Activated CD8-positive, alpha-beta T cell treated with anti-CD3 and anti-CD28 coated beads, Interleukin-2, amount 10 ng/mL, durations not matched to agents 7 days and 5 days (primary cell): ENCODE measurements at regions of chr17 and their contacts with region 1.

Region 1: DNA sequence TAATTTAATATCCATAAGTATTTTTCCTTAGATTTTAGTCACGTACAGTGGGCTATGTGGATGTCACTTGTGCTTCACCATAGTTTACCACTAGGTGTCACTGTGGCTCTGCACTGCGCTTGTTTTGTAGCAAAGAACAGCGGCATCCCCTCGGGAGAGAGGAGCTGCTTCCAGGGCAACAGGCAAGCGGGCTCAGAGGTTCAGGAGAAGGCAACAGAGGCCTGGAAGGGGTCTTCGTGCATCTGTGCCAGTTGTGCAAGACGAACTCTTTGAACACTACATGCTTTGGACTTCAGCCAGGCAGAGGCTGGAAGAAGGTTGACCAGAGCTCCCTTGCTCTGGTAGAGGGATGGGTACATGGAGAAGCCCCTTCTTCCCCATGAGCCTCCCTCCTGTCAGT is 20.6 kb downstream of the CYB561 start:
- DNase-seq: peak; percentile 83
- ATAC-seq: peak; percentile 82
- H3K4me3 Mint-ChIP-seq: no peak overlapping the region
- H3K27ac Mint-ChIP-seq: no peak overlapping the region
- H3K4me1 Mint-ChIP-seq: peaks cover 52% of the 10 kb centered on the region
- H3K27me3 Mint-ChIP-seq: no peaks in the 10 kb centered on the region

Region 2: GRCh38 chr17:63140255-63140654 is 285.2 kb before region 1 on chr17:
- CTCF ChIA-PET with region 1: no interaction called
- POLR2A ChIA-PET with region 1: no interaction called
- DNase-seq: no peak
- ATAC-seq: no peak
- H3K4me3 Mint-ChIP-seq: no peak overlapping the region
- H3K27ac Mint-ChIP-seq: no peak overlapping the region
- H3K4me1 Mint-ChIP-seq: no peaks in the 10 kb centered on the region
- H3K27me3 Mint-ChIP-seq: no peaks in the 10 kb centered on the region

Region 3: DNA sequence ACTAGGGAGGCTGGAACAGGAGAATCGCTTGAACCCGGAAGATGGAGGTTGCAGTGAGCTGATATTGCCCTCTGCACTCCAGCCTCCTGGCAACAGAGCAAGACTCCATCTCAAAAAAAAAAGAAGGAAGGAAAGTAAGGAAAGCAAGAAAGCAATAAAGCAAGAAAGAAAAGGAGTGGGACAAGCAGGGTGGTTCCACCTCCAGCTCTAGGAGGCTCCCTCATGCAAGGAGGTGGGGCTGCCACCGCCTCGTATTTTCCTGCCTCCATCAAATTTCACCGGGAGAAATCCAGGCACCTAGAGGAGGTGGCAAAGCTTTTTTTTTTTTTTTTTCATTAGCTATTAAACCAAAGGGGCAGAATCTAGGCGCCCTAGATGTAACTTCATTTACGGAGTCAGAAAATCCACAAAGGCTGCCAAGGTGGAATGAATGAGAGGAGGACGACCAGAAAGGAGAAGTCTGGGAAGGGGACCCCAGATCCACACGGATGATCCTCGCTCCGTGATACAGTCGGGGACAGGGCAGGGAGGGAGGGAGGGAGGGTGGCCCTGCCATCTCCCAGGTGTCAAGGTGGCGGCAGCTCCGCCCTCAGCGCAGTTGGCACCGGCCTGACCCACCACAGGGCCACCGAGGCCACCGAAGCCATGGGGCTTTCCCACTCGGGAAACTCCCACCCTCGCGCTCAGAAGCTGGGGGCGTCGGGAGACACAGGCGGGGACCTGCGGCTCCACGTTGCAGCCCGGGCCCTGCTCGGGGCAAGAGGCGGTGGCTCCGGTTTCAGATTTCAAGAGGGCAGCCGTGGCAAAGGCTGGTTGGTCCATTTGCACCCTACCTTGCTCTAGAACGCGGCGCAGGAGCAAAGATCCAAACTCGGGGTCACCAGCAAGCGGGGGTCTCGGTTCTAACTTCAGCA is 19.8 kb after region 1 on chr17:
- CTCF ChIA-PET with region 1: interaction called, 20 read pairs
- POLR2A ChIA-PET with region 1: interaction called, 4 read pairs
- DNase-seq: no peak
- ATAC-seq: peak; percentile 30
- H3K4me3 Mint-ChIP-seq: peak overlapping the region; percentile 52
- H3K27ac Mint-ChIP-seq: no peak overlapping the region
- H3K4me1 Mint-ChIP-seq: peaks cover 33% of the 10 kb centered on the region
- H3K27me3 Mint-ChIP-seq: peaks cover 18% of the 10 kb centered on the region

Region 4: GRCh38 chr17:63478791-63479494 is 53.5 kb after region 1 on chr17:
- CTCF ChIA-PET with region 1: interaction called, 270 read pairs
- POLR2A ChIA-PET with region 1: no interaction called
- DNase-seq: peak; percentile 87
- ATAC-seq: peak; percentile 89
- H3K4me3 Mint-ChIP-seq: no peak overlapping the region
- H3K27ac Mint-ChIP-seq: no peak overlapping the region
- H3K4me1 Mint-ChIP-seq: peaks cover 16% of the 10 kb centered on the region
- H3K27me3 Mint-ChIP-seq: peaks cover 39% of the 10 kb centered on the region

Region 5: GRCh38 chr17:63600569-63601438 is 175.3 kb after region 1 on chr17 and contains the start of gene TACO1:
- CTCF ChIA-PET with region 1: interaction called, 15 read pairs
- POLR2A ChIA-PET with region 1: no interaction called
- DNase-seq: peak; percentile 82
- ATAC-seq: peak; percentile 90
- H3K4me3 Mint-ChIP-seq: peak within 1 kb of the TSS; percentile 89
- H3K27ac Mint-ChIP-seq: peak within 1 kb of the TSS; percentile 91
- H3K4me1 Mint-ChIP-seq: peaks cover 33% of the 10 kb centered on the region
- H3K27me3 Mint-ChIP-seq: no peaks in the 10 kb centered on the region
- total RNA-seq, gene TACO1: 22.9 to 24.5 TPM

Region 6: DNA sequence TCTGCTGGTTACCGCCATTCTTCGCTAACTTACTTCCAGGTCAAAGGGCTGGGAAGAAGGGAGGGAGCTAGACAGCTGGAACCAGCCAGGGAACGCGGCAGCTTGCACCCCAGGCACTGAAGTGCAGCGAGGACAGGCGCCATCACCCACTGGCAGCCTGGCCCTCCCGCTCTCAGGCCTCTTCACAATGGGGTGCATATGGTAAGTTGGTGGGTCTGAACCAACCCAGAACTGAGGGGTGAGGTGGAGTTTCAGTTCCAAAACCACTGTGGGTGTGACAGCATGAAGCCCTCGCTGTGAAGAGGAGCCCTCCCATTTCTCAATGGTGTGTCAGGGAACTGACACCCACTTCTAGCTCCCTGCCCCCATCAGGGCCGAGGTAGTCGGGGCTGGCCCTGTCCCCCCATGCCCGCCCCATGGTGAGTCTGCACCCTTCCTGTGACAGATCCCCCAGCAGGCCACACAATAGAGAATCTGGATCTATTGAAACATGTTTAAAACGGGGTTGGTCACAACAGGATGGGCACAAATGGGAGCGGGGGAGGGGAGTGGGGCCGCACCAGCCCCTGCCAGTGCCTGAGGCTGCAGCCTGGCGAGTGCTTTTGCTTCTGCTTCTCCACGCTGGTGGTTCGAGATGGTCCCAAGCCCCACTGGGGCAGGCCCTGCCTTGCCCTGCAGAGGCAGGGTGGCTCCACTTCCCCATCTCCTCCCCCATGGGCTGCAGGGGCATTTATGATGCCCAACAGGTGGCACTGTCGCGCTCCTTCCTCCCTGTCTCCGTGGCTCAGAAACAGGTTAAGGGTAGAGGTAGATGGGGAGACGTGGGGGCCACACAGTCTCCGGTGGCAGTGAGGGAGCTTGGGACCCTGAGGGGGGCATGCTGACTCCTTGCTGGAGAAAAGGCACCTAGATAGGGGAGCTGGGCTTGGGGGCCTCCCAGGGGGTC is 272.1 kb after region 1 on chr17:
- CTCF ChIA-PET with region 1: interaction called, 10 read pairs
- POLR2A ChIA-PET with region 1: interaction called, 4 read pairs
- DNase-seq: peak; percentile 91
- ATAC-seq: peak; percentile 35
- H3K4me3 Mint-ChIP-seq: peak overlapping the region; percentile 96
- H3K27ac Mint-ChIP-seq: peak overlapping the region; percentile 98
- H3K4me1 Mint-ChIP-seq: peaks cover 59% of the 10 kb centered on the region
- H3K27me3 Mint-ChIP-seq: no peaks in the 10 kb centered on the region